HepG2 (cell line): ENCODE measurements at regions of chr9 and their contacts with region 1.

Region 1: DNA sequence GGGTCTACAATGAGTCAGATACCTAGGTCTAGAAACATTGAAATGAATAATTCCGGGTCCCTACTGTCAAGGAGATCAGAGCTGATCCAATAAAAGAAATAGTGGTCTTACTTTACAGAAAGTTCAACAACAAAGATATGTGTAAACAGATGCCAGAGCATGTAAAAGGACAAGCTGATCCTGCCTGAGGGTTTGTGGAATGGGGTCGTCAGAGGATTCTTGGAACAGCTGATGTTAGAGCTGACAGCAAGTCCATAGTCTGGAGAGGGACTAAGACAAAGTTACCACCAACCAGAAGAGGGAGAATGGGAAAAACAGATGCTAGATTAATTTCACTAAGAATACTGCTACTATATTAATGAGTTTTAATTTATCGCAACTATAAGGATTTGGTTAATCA is 71.5 kb downstream of the FREM1 start:
- DNase-seq: no peak
- ATAC-seq: no peak
- H3K4me3 ChIP-seq: no peak overlapping the region
- H3K27ac ChIP-seq: no peak overlapping the region
- H3K4me1 ChIP-seq: no peaks in the 10 kb centered on the region
- H3K27me3 ChIP-seq: no peaks in the 10 kb centered on the region
- CTCF ChIP-seq: no peak
- EP300 ChIP-seq: no peak
- POLR2A ChIP-seq: no peak
- RAD21 ChIP-seq: no peak

Region 2: DNA sequence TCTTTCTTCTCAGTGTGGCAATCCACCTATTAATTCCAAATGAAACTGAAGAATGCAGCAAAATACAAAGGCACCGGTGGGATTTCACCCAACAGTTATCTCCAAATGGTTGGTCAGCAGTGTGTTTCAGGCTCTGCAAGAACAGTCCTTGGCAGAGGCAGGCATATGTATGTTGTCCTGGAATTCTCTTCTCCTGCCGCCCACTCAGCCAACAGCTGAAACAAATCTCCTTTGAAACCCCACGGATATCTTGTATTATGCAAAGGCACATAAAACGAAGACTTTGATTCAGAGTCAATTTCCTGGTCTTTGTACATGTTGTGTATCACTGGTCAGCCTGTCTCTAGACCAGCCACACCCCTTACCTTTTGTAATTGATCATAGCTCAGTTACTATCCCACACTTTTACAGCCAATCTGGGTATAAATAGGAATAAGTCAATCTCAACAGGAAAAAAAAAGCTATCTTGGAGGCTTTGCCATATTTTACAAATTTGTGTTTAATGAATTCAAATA is 42.3 kb after region 1 on chr9:
- CTCF ChIA-PET with region 1: no interaction called
- POLR2A ChIA-PET with region 1: no interaction called
- in situ Hi-C with region 1: no loop called
- intact Hi-C with region 1: loop called (anchors 1 kb)
- DNase-seq: no peak
- ATAC-seq: no peak
- H3K4me3 ChIP-seq: no peak overlapping the region
- H3K27ac ChIP-seq: peak overlapping the region; percentile 9
- H3K4me1 ChIP-seq: peaks cover 63% of the 10 kb centered on the region
- H3K27me3 ChIP-seq: no peaks in the 10 kb centered on the region
- CTCF ChIP-seq: no peak
- EP300 ChIP-seq: no peak
- POLR2A ChIP-seq: no peak
- RAD21 ChIP-seq: no peak

Region 3: DNA sequence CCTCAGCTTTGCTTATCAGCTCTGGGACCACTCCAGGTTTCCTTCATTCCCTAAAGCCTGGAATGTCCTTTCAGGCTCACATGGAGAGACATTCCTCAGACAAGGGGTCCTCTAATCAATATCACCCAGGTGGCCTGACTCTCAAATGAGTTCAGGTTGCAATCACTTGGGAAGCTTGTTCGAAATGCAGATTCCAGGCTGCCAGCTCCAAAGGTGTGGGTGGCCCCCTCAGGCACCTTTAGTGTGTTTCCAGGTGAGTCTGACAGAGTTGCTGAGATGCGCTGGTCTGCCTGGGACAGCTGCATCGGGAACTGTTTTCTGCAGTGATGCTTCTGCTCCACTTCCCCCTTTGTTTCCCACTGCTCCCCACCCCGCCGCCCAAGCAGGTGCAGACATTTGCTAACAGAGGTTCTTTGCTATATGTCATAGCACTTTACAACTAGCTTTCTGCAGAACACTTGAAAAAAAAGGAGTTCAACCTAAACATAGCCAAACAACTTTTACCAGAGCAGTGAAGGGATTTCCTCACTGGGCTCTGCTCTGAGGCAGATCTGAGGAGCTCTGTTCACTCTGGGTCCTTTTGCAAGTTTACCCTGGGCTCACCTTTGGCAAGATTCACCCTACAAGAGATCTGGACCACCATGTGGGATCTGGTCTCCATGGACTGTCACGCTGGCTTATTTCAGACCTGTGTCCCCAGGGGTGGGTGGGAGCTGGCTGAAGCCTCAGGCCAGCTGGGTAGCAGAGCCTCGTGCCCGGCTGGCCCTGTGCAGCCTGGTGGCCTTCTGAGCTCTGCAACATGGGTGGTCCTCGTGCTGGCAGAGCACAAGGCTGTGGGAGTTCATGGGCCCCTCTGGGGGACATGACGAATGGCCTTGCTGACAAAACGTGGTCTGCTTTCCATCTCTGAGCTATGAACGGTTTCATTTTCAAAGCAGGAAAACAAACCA is 1253.7 kb after region 1 on chr9:
- CTCF ChIA-PET with region 1: no interaction called
- POLR2A ChIA-PET with region 1: no interaction called
- in situ Hi-C with region 1: no loop called
- intact Hi-C with region 1: no loop called
- DNase-seq: no peak
- ATAC-seq: no peak
- H3K4me3 ChIP-seq: no peak overlapping the region
- H3K27ac ChIP-seq: no peak overlapping the region
- H3K4me1 ChIP-seq: no peaks in the 10 kb centered on the region
- H3K27me3 ChIP-seq: peaks cover 0 to 2% of the 10 kb centered on the region in 2 experiments; a peak in 2 of 5 replicates
- CTCF ChIP-seq: no peak
- EP300 ChIP-seq: no peak
- POLR2A ChIP-seq: no peak
- RAD21 ChIP-seq: no peak